CD8-positive, alpha-beta T cell (primary cell): ENCODE measurements at regions of chr2 and their contacts with region 1.

Region 1: GRCh38 chr2:27890146-27890923 is at the starts of genes BABAM2 and RBKS:
- DNase-seq: peak; percentile 86 to 97 (median 93)
- ATAC-seq: peak; percentile 79
- H3K4me3 ChIP-seq: peak within 1 kb of the TSS; percentile 77 to 95
- H3K4me3 Mint-ChIP-seq: peak within 1 kb of the TSS; percentile 94
- H3K27ac ChIP-seq: peak within 1 kb of the TSS; percentile 98 to 100
- H3K27ac Mint-ChIP-seq: peak within 1 kb of the TSS; percentile 100
- H3K4me1 ChIP-seq: peaks cover 22% of the 10 kb centered on the region
- H3K4me1 Mint-ChIP-seq: peaks cover 58% of the 10 kb centered on the region
- H3K27me3 ChIP-seq: no peaks in the 10 kb centered on the region
- H3K27me3 Mint-ChIP-seq: peaks cover 2% of the 10 kb centered on the region
- CTCF ChIP-seq: no peak
- total RNA-seq, gene BABAM2: 26.3 to 33.1 TPM
- total RNA-seq, gene RBKS: 5.9 to 6.3 TPM

Region 2: DNA sequence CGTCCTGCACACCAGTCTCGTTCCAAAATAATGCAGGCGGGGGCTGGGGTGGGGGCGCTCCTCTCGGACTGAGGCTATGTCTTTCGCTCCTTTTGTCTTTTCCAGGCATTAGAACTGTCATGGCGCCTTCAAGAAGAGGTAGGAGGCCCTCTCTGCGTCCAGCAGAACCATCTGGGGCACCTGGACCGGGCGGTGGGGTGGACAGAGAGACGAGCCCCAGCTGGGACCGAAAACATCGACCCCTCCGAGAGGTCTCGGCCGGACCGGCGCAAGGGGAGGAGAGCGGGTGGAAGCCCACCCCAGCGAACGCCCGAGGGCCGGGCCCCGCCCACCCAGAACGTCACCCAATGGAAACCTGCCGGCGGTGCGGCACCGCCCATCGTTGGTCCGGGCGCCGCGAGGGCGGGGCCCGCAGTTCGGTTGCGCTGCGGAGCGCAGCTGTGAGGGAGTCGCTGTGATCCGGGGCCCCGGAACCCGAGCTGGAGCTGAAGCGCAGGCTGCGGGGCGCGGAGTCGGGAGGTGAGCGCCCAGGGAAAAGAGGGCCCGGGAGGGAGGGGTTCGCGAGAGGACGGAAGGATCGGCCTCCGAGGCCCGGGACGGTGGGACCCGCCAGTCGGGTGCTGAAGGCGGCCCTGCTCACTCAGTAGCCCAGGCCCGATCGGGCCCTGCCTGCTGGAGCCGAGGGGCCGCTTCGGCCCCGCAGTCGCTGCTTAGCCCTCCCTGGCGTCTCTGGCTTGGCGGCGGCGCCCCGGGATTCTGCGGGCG is 461.9 kb before region 1 on chr2 and contains the start of gene NRBP1:
- CTCF ChIA-PET with region 1: no interaction called
- POLR2A ChIA-PET with region 1: no interaction called
- intact Hi-C with region 1: loop called in 1 of 2 experiments (anchors 5 kb)
- DNase-seq: peak; percentile 80 to 95 (median 91)
- ATAC-seq: peak; percentile 91
- H3K4me3 ChIP-seq: peak within 1 kb of the TSS; percentile 81 to 92
- H3K4me3 Mint-ChIP-seq: peak within 1 kb of the TSS; percentile 97
- H3K27ac ChIP-seq: peak within 1 kb of the TSS; percentile 79 to 90
- H3K27ac Mint-ChIP-seq: peak within 1 kb of the TSS; percentile 97
- H3K4me1 ChIP-seq: peaks cover 29% of the 10 kb centered on the region
- H3K4me1 Mint-ChIP-seq: peaks cover 38% of the 10 kb centered on the region
- H3K27me3 ChIP-seq: no peaks in the 10 kb centered on the region
- H3K27me3 Mint-ChIP-seq: no peaks in the 10 kb centered on the region
- CTCF ChIP-seq: no peak
- total RNA-seq, gene NRBP1: 192 to 196 TPM

Region 3: GRCh38 chr2:27663463-27664249 is 226.7 kb before region 1 on chr2 and contains the starts of genes SLC4A1AP and SUPT7L:
- CTCF ChIA-PET with region 1: no interaction called
- POLR2A ChIA-PET with region 1: no interaction called
- intact Hi-C with region 1: loop called in 1 of 2 experiments (anchors 1 kb)
- DNase-seq: peak; percentile 54 to 90 (median 74)
- ATAC-seq: peak; percentile 81
- H3K4me3 ChIP-seq: peak within 1 kb of the TSS; percentile 96 to 99
- H3K4me3 Mint-ChIP-seq: peak within 1 kb of the TSS; percentile 100
- H3K27ac ChIP-seq: peak within 1 kb of the TSS; percentile 95 to 98
- H3K27ac Mint-ChIP-seq: peak within 1 kb of the TSS; percentile 100
- H3K4me1 ChIP-seq: peaks cover 28% of the 10 kb centered on the region
- H3K4me1 Mint-ChIP-seq: peaks cover 60% of the 10 kb centered on the region
- H3K27me3 ChIP-seq: no peaks in the 10 kb centered on the region
- H3K27me3 Mint-ChIP-seq: no peaks in the 10 kb centered on the region
- CTCF ChIP-seq: no peak
- total RNA-seq, gene SLC4A1AP: 21.4 to 22.8 TPM
- total RNA-seq, gene SUPT7L: 54.0 to 55.5 TPM

Region 4: DNA sequence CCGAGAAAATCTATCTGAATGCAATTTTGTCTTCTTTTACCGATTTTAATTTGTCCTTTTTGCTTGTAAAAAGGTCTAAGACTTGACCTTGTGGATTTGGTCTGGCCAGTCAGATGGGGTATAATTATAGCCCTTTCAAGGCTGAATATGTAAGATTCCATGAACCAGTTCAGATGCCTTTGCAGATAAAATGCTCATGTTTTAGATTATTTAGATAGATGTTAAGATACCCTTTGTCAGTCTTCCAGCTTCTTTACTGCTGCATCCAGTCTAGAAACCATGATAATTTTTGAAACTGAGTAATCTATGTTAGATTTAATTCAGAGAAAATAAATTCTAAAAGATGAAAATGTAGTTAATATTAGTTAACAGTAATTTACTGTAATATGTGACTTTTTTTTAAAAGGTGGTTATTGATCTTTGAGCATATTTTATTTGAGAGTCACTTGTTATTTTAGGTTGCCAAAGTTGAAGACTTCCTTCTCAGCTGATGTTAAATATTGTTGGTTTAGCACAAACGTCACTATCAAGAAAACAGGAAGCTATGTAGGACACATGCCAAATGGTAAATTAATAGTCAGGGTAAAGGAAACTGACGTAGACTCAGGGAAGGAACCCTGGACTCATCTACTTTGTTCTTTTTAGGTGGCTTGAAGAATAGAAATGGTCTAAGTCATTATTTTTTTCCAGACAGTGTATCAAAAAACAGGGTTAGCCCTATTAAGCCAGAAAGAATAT is 30.0 kb after region 1 on chr2:
- CTCF ChIA-PET with region 1: no interaction called
- POLR2A ChIA-PET with region 1: interaction called, 5 read pairs
- intact Hi-C with region 1: loop called in 1 of 2 experiments (anchors 1 kb)
- DNase-seq: peak in 2 of 9 experiments; percentile 72 to 88
- ATAC-seq: peak; percentile 96
- H3K4me3 ChIP-seq: no peak overlapping the region
- H3K4me3 Mint-ChIP-seq: no peak overlapping the region
- H3K27ac ChIP-seq: peak overlapping the region in 1 of 2 experiments; percentile 78
- H3K27ac Mint-ChIP-seq: peak overlapping the region; percentile 41
- H3K4me1 ChIP-seq: peaks cover 9% of the 10 kb centered on the region
- H3K4me1 Mint-ChIP-seq: peaks cover 22% of the 10 kb centered on the region
- H3K27me3 ChIP-seq: no peaks in the 10 kb centered on the region
- H3K27me3 Mint-ChIP-seq: no peaks in the 10 kb centered on the region
- CTCF ChIP-seq: no peak

Region 5: GRCh38 chr2:28392297-28393113 is 502.2 kb after region 1 on chr2 and contains the start of gene FOSL2:
- CTCF ChIA-PET with region 1: no interaction called
- POLR2A ChIA-PET with region 1: interaction called, 5 read pairs
- intact Hi-C with region 1: loop called (anchors 1 kb)
- DNase-seq: peak; percentile 83 to 99 (median 92)
- ATAC-seq: peak; percentile 69
- H3K4me3 ChIP-seq: peak within 1 kb of the TSS; percentile 69 to 78
- H3K4me3 Mint-ChIP-seq: peak within 1 kb of the TSS; percentile 86
- H3K27ac ChIP-seq: peak within 1 kb of the TSS; percentile 85 to 95
- H3K27ac Mint-ChIP-seq: peak within 1 kb of the TSS; percentile 97
- H3K4me1 ChIP-seq: peaks cover 36% of the 10 kb centered on the region
- H3K4me1 Mint-ChIP-seq: peaks cover 25% of the 10 kb centered on the region
- H3K27me3 ChIP-seq: no peaks in the 10 kb centered on the region
- H3K27me3 Mint-ChIP-seq: no peaks in the 10 kb centered on the region
- CTCF ChIP-seq: no peak
- total RNA-seq, gene FOSL2: 359 to 360 TPM

Region 6: DNA sequence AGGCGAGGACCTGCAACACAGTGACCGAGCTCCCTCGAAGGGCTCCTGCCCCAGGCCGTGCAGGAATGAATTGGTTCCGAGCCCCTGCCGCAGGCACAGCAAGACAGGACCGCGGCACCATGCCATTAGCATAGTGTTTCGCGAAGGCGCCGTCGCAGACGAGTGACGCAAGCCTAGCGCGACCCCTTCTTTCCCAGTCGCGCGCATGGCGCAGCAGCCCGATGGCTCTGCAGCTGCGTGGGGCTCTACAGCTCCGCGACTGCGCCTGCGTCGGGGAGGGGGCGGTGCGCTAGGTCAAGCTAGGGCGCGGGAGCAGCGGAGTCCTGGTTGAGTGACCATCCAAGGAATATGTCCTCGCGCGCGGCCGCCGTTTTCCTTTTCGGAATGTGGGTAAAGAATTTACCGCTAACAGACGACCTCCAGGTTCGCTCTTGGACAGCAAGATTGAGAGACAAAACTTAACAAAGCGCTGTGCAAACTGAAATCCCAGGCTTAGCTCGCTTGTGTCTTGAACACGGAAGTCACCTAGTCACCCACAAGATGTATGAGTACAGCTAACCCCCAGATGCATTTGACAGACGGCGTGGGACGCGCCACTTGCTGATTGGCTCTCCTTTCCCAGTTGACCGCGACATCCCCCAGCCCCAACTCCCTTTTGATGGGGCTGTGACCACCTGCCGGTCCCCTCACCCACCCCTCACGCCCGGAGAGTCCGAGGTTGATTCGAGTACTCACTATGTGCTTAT is 980.0 kb after region 1 on chr2 and contains the start of gene TRMT61B:
- CTCF ChIA-PET with region 1: no interaction called
- POLR2A ChIA-PET with region 1: no interaction called
- intact Hi-C with region 1: loop called in 1 of 2 experiments (anchors 5 kb)
- DNase-seq: peak; percentile 89 to 99 (median 97)
- ATAC-seq: peak; percentile 96
- H3K4me3 ChIP-seq: peak within 1 kb of the TSS; percentile 89 to 98
- H3K4me3 Mint-ChIP-seq: peak within 1 kb of the TSS; percentile 94
- H3K27ac ChIP-seq: peak within 1 kb of the TSS; percentile 94 to 95
- H3K27ac Mint-ChIP-seq: peak within 1 kb of the TSS; percentile 99
- H3K4me1 ChIP-seq: peaks cover 28% of the 10 kb centered on the region
- H3K4me1 Mint-ChIP-seq: peaks cover 33% of the 10 kb centered on the region
- H3K27me3 ChIP-seq: no peaks in the 10 kb centered on the region
- H3K27me3 Mint-ChIP-seq: no peaks in the 10 kb centered on the region
- CTCF ChIP-seq: no peak
- total RNA-seq, gene TRMT61B: 17.9 to 22.9 TPM

Region 7: GRCh38 chr2:29115797-29116781 is 1225.8 kb after region 1 on chr2:
- CTCF ChIA-PET with region 1: no interaction called
- POLR2A ChIA-PET with region 1: no interaction called
- intact Hi-C with region 1: loop called in 1 of 2 experiments (anchors 2 kb)
- DNase-seq: peak; percentile 43 to 89 (median 73)
- ATAC-seq: peak; percentile 59
- H3K4me3 ChIP-seq: peak overlapping the region; percentile 80 to 82
- H3K4me3 Mint-ChIP-seq: peak overlapping the region; percentile 91
- H3K27ac ChIP-seq: peak overlapping the region; percentile 86 to 92
- H3K27ac Mint-ChIP-seq: peak overlapping the region; percentile 95
- H3K4me1 ChIP-seq: peaks cover 39% of the 10 kb centered on the region
- H3K4me1 Mint-ChIP-seq: peaks cover 54% of the 10 kb centered on the region
- H3K27me3 ChIP-seq: no peaks in the 10 kb centered on the region
- H3K27me3 Mint-ChIP-seq: no peaks in the 10 kb centered on the region
- CTCF ChIP-seq: no peak